ENCODE measurements at regions of chrX and their contacts with region 1.

Region 1: GRCh38 chrX:154397819-154398724 is at the start of gene RPL10:
- DNase-seq: peak; percentile 98
- H3K4me3 ChIP-seq: peak within 1 kb of the TSS; percentile 63 to 76 (median 66)
- H3K27ac ChIP-seq: peak within 1 kb of the TSS; percentile 90 to 98 (median 95)
- H3K4me1 ChIP-seq: peaks cover 7 to 32% (median 22%) of the 10 kb centered on the region in 4 donors
- H3K27me3 ChIP-seq: no peaks in the 10 kb centered on the region
- CTCF ChIP-seq: no peak
- EP300 ChIP-seq: no peak
- POLR2A ChIP-seq: peak; percentile 94
- total RNA-seq, gene RPL10: 2,150 to 7,554 (median 4,519) TPM

Region 2: GRCh38 chrX:154333837-154334271 is 64.2 kb before region 1 on chrX:
- intact Hi-C with region 1: loop called (anchors 5 kb)
- DNase-seq: no peak
- H3K4me3 ChIP-seq: no peak overlapping the region
- H3K27ac ChIP-seq: no peak overlapping the region
- H3K4me1 ChIP-seq: no peaks in the 10 kb centered on the region
- H3K27me3 ChIP-seq: no peaks in the 10 kb centered on the region
- CTCF ChIP-seq: no peak
- EP300 ChIP-seq: no peak
- POLR2A ChIP-seq: no peak

Region 3: GRCh38 chrX:154490414-154491083 is 92.5 kb after region 1 on chrX and contains the start of gene SLC10A3:
- intact Hi-C with region 1: no loop called
- DNase-seq: peak; percentile 97
- H3K4me3 ChIP-seq: peak within 1 kb of the TSS; percentile 63 to 81 (median 68)
- H3K27ac ChIP-seq: peak within 1 kb of the TSS; percentile 88 to 97 (median 94)
- H3K4me1 ChIP-seq: peaks cover 12 to 35% (median 32%) of the 10 kb centered on the region in 4 donors
- H3K27me3 ChIP-seq: no peaks in the 10 kb centered on the region
- CTCF ChIP-seq: no peak
- EP300 ChIP-seq: no peak
- POLR2A ChIP-seq: peak; percentile 14
- total RNA-seq, gene SLC10A3: 24.5 to 44.9 (median 38.1) TPM

Region 4: GRCh38 chrX:154534862-154535670 is 137.0 kb after region 1 on chrX:
- intact Hi-C with region 1: loop called (anchors 5 kb)
- DNase-seq: no peak
- H3K4me3 ChIP-seq: no peak overlapping the region
- H3K27ac ChIP-seq: peak overlapping the region; percentile 19 to 66 (median 50)
- H3K4me1 ChIP-seq: peaks cover 4 to 11% (median 5%) of the 10 kb centered on the region in 4 donors
- H3K27me3 ChIP-seq: no peaks in the 10 kb centered on the region
- CTCF ChIP-seq: peak; percentile 93 to 100 (median 100)
- EP300 ChIP-seq: no peak
- POLR2A ChIP-seq: no peak

Measured in esophagus muscularis mucosa (tissue), 4 donors.